Activated CD8-positive, alpha-beta memory T cell treated with anti-CD3 and anti-CD28 coated beads, Interleukin-2, amount 10 ng/mL, durations not matched to agents 7 days and 5 days (primary cell): ENCODE measurements at regions of chr12 and their contacts with region 1.

Region 1: GRCh38 chr12:77010691-77011548 is 54.4 kb downstream of the E2F7 start:
- DNase-seq: peak; percentile 83
- ATAC-seq: peak; percentile 64
- H3K4me3 Mint-ChIP-seq: no peak overlapping the region
- H3K27ac Mint-ChIP-seq: no peak overlapping the region
- H3K4me1 Mint-ChIP-seq: peaks cover 2% of the 10 kb centered on the region
- H3K27me3 Mint-ChIP-seq: peaks cover 29% of the 10 kb centered on the region

Region 2: DNA sequence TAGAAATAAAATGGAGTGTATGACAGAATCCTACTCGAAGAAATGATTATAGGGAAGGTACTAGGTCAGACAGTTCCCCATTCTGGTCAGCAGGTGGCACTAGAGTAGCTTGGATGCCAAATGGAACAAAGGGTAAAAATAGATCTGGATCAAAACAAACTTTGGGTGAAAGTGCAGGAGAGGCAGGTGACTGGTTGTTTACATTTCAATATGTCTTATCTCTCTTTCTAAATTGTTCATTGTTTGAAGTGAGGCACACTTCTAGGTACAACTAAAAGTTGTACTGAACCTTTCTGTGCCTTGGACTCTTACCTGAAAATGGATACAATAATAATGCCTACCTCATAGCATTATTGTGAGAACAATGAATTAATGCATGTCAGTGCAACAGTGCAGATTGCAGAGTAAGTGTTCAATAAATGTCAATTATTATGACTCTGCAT is 389.3 kb before region 1 on chr12:
- CTCF ChIA-PET with region 1: interaction called, 36 read pairs
- DNase-seq: peak; percentile 80
- ATAC-seq: peak; percentile 72
- H3K4me3 Mint-ChIP-seq: no peak overlapping the region
- H3K27ac Mint-ChIP-seq: no peak overlapping the region
- H3K4me1 Mint-ChIP-seq: peaks cover 4% of the 10 kb centered on the region
- H3K27me3 Mint-ChIP-seq: peaks cover 5% of the 10 kb centered on the region

Region 3: GRCh38 chr12:77025782-77026314 is 14.9 kb after region 1 on chr12:
- CTCF ChIA-PET with region 1: interaction called, 26 read pairs
- DNase-seq: no peak
- ATAC-seq: no peak
- H3K4me3 Mint-ChIP-seq: no peak overlapping the region
- H3K27ac Mint-ChIP-seq: no peak overlapping the region
- H3K4me1 Mint-ChIP-seq: no peaks in the 10 kb centered on the region
- H3K27me3 Mint-ChIP-seq: no peaks in the 10 kb centered on the region

Region 4: GRCh38 chr12:77102691-77103090 is 91.8 kb after region 1 on chr12:
- CTCF ChIA-PET with region 1: no interaction called
- DNase-seq: no peak
- ATAC-seq: no peak
- H3K4me3 Mint-ChIP-seq: no peak overlapping the region
- H3K27ac Mint-ChIP-seq: no peak overlapping the region
- H3K4me1 Mint-ChIP-seq: peaks cover 1% of the 10 kb centered on the region
- H3K27me3 Mint-ChIP-seq: no peaks in the 10 kb centered on the region

Region 5: DNA sequence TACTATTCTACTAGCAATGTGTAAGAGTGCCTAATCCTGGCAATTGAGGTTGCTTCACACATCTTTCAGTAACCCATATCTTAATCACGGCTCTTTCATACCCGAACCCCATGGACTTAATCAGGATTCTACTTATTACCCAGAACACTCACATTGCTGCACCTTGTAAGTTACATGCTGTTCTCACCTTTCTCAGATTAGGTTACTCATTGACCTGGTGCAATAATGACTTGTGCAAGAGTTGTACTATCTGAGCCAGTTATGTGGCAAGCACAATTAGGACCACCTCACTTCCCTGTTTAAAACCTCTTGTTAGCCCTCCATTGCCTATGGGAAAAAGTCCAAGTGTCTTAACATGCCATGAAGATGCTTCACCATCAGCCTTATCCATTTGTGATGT is 361.1 kb after region 1 on chr12:
- CTCF ChIA-PET with region 1: no interaction called
- DNase-seq: no peak
- ATAC-seq: no peak
- H3K4me3 Mint-ChIP-seq: no peak overlapping the region
- H3K27ac Mint-ChIP-seq: no peak overlapping the region
- H3K4me1 Mint-ChIP-seq: no peaks in the 10 kb centered on the region
- H3K27me3 Mint-ChIP-seq: no peaks in the 10 kb centered on the region